Cardiac septum (tissue), 1 donor: ENCODE measurements at regions of chr16 and their contacts with region 1.

Region 1: GRCh38 chr16:75622761-75623605 is at the start of gene ADAT1:
- DNase-seq: peak; percentile 99
- total RNA-seq, gene ADAT1: 28.0 TPM

Region 2: GRCh38 chr16:75464130-75464918 is 158.7 kb before region 1 on chr16 and contains the start of gene TMEM170A:
- intact Hi-C with region 1: loop called (anchors 2 kb)
- DNase-seq: peak; percentile 99
- total RNA-seq, gene TMEM170A: 10.4 TPM

Region 3: DNA sequence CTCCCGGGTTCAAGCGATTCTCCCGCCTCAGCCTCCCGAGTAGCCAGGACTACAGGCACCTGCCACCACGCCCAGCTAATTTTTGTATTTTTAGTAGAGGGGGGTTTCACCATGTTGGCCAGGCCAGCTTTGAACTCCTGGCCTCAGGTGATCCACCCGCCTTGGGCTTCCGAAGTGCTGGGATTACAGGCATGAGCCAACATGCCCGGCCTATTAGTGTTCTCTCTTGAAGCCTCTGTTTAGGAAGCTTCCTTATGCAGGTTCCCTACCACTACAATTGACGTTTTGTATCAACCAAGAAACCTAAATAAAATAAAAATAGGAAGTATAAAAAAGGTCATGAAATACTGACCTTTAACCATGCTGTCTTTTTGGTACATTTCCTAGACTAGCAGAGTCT is 103.1 kb before region 1 on chr16:
- intact Hi-C with region 1: loop called (anchors 5 kb)
- DNase-seq: no peak

Region 4: DNA sequence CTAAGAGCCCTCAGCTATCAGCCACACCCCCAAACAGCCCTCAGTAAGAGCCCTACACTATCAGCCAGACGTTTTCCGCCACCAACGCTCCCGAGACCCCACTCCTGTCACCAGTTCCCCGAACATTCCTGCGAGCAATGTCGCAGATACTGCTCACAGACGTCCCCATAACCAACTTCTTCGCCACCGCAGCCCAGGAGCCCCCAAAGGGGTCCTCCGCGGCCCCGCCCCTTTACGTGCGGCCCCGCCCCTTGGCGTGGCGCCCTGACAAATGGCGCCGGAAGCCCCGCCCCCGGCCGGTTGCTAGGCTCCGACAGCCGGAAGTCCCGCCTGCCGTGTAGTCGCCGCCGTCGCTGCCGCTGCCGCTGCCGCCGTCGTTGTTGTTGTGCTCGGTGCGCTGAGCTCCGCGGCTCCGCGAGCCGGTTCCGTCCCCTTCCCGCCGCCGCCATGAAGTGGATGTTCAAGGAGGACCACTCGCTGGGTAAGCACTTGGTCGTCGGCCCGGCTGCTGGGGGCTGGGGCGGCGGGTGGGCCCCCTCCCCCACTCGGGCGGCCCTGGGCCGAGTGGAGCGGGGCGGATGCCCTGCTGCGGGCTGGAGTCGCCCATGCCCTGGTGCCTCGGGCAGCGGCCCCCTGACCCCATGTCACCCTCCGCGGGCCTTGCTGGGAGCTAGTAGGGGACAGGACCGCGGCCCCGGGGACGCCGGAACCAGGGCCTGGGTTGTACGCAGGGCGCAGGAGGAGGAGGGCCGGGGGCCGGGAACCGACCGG is 56.8 kb before region 1 on chr16 and contains the start of gene GABARAPL2:
- intact Hi-C with region 1: loop called (anchors 5 kb)
- DNase-seq: peak; percentile 95
- total RNA-seq, gene GABARAPL2: 233 TPM

Region 5: GRCh38 chr16:75647492-75648264 is 24.7 kb after region 1 on chr16 and contains the starts of genes KARS1 and TERF2IP:
- intact Hi-C with region 1: loop called (anchors 2 kb)
- DNase-seq: peak; percentile 98
- total RNA-seq, gene KARS1: 89.3 TPM
- total RNA-seq, gene TERF2IP: 76.0 TPM

Region 6: GRCh38 chr16:75667503-75667902 is 44.5 kb after region 1 on chr16:
- intact Hi-C with region 1: no loop called
- DNase-seq: no peak